ENCODE measurements at regions of chr13 and their contacts with region 1.

Region 1: DNA sequence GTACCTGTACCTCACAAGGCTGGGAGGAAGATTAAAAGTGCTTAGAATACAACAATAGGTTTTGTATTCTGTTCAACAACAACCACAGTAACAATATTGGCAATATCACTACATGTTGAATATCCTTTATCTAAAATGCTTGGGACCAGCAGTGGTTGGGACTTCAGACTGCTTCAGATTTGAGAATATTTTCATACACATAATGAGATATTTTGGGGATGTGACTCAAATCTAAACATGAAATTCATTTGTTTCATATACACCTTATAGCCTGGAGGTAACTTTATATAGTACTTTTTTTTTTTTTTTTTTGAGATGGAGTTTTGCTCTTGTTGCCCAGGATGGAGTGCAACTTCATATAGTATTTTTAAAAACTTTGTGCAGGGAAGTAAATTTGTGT is 73.9 kb downstream of the USP12 start:
- DNase-seq: no peak
- ATAC-seq: no peak
- H3K4me3 ChIP-seq: no peak overlapping the region
- H3K4me3 Mint-ChIP-seq: no peak overlapping the region
- H3K27ac ChIP-seq: no peak overlapping the region
- H3K27ac Mint-ChIP-seq: no peak overlapping the region
- H3K4me1 ChIP-seq: no peaks in the 10 kb centered on the region
- H3K4me1 Mint-ChIP-seq: peaks cover 22 to 26% (median 23%) of the 10 kb centered on the region in 3 donors
- H3K27me3 ChIP-seq: no peaks in the 10 kb centered on the region
- H3K27me3 Mint-ChIP-seq: no peaks in the 10 kb centered on the region

Region 2: DNA sequence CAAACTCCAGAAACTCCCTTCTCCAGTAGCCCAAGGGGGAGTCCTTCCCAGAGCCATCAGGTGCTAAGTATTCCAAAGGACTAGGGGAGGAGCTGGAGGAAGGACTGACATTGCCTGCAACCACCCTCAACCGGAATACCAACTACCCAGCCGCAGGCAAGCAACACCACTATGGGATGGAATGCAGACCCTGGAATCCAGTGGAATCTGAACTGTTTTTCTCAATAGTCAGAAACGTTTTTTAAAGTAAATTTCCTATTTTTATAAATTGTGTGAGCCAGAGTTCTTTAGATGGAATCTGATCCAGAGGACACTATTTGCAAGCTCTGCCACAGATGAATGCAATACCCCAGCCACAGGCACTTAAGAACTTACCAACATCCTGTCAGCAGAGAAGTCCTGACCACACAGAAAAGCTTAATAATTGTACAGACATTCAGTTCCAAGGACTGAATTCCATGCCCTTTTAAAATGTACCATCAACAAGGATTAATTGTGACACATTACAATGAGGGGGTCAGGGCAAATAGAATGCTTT is 18.2 kb before region 1 on chr13:
- CTCF ChIA-PET with region 1: no interaction called
- POLR2A ChIA-PET with region 1: interaction called in 1 of 2 experiments, 10 read pairs
- DNase-seq: no peak
- ATAC-seq: no peak
- H3K4me3 ChIP-seq: no peak overlapping the region
- H3K4me3 Mint-ChIP-seq: no peak overlapping the region
- H3K27ac ChIP-seq: no peak overlapping the region
- H3K27ac Mint-ChIP-seq: no peak overlapping the region
- H3K4me1 ChIP-seq: no peaks in the 10 kb centered on the region
- H3K4me1 Mint-ChIP-seq: peaks cover 16 to 25% (median 17%) of the 10 kb centered on the region in 3 donors
- H3K27me3 ChIP-seq: no peaks in the 10 kb centered on the region
- H3K27me3 Mint-ChIP-seq: no peaks in the 10 kb centered on the region

Region 3: DNA sequence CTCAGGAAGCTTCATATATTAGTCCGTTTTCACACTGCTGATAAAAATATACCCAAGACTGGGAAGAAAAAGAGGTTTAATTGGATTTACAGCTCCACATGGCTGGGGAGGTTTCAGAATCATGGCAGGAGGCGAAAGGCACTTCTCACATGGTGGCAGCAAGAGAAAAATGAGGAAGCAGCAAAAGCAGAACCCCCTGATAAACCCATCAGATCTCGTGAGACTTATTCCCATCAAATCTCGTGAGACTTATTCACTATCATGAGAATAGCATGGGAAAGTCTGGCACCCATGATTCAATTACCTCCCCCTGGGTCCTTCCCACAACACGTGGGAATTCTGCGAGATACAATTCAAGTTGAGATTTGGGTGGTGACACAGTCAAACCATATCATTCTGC is 979.5 kb after region 1 on chr13:
- CTCF ChIA-PET with region 1: no interaction called
- POLR2A ChIA-PET with region 1: no interaction called
- DNase-seq: no peak
- ATAC-seq: no peak
- H3K4me3 ChIP-seq: no peak overlapping the region
- H3K4me3 Mint-ChIP-seq: no peak overlapping the region
- H3K27ac ChIP-seq: no peak overlapping the region
- H3K27ac Mint-ChIP-seq: no peak overlapping the region
- H3K4me1 ChIP-seq: no peaks in the 10 kb centered on the region
- H3K4me1 Mint-ChIP-seq: no peaks in the 10 kb centered on the region
- H3K27me3 ChIP-seq: peaks cover 0 to 5% of the 10 kb centered on the region in 2 experiments
- H3K27me3 Mint-ChIP-seq: peaks cover 0 to 6% of the 10 kb centered on the region in 2 donors